Dendritic cell treated with granulocyte-macrophage colony-stimulating factor and Interleukin-4, amounts not matched to agents 40 ng/mL and 50 ng/mL, for 4 days (primary cell): ENCODE measurements at regions of chr17 and their contacts with region 1.

Region 1: GRCh38 chr17:49315551-49316257 is 46.3 kb downstream of the ZNF652 start:
- H3K4me3 Mint-ChIP-seq: no peak overlapping the region
- H3K27ac Mint-ChIP-seq: no peak overlapping the region
- H3K4me1 Mint-ChIP-seq: peaks cover 26% of the 10 kb centered on the region
- H3K27me3 Mint-ChIP-seq: no peaks in the 10 kb centered on the region

Region 2: GRCh38 chr17:49297141-49297540 is 18.6 kb before region 1 on chr17:
- intact Hi-C with region 1: no loop called
- H3K4me3 Mint-ChIP-seq: no peak overlapping the region
- H3K27ac Mint-ChIP-seq: no peak overlapping the region
- H3K4me1 Mint-ChIP-seq: peaks cover 6% of the 10 kb centered on the region
- H3K27me3 Mint-ChIP-seq: no peaks in the 10 kb centered on the region

Region 3: DNA sequence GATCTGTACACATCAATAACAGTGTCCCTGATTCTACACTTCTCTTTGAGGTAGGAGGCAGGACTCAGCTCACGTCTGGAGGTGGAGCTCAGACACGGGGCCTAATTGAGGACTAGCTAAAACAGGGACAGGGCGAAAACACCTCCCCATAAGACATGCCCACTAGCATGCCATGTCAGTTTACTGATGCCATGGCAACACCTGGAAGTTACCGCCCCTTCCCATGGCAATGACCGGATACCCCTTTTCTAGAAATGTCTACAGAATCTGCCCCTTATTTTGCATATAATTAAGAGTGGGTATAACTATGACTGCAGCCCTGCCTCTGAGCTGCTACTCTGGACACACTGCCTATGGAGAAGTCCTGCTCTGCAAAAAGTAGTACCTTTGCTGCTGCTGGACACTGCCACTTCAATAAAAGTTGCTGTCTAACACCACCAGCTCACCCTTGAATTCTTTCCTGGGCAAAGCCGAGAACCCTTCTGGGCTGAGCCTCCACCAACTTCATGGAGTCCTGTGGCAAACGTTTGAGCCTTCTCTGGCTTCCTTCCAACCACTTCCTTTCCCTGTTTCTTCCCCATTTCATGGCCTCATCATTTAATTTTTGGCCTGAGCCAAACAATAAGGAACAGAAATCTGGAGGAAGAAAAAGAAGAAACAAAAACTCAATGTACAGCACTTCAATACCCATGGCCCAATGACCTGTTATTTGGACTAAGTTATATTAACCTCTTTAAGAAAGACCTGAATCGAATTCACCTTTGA is 78.0 kb after region 1 on chr17:
- intact Hi-C with region 1: loop called (anchors 1 kb)
- H3K4me3 Mint-ChIP-seq: peak overlapping the region; percentile 42
- H3K27ac Mint-ChIP-seq: peak overlapping the region; percentile 86
- H3K4me1 Mint-ChIP-seq: peaks cover 64% of the 10 kb centered on the region
- H3K27me3 Mint-ChIP-seq: no peaks in the 10 kb centered on the region

Region 4: DNA sequence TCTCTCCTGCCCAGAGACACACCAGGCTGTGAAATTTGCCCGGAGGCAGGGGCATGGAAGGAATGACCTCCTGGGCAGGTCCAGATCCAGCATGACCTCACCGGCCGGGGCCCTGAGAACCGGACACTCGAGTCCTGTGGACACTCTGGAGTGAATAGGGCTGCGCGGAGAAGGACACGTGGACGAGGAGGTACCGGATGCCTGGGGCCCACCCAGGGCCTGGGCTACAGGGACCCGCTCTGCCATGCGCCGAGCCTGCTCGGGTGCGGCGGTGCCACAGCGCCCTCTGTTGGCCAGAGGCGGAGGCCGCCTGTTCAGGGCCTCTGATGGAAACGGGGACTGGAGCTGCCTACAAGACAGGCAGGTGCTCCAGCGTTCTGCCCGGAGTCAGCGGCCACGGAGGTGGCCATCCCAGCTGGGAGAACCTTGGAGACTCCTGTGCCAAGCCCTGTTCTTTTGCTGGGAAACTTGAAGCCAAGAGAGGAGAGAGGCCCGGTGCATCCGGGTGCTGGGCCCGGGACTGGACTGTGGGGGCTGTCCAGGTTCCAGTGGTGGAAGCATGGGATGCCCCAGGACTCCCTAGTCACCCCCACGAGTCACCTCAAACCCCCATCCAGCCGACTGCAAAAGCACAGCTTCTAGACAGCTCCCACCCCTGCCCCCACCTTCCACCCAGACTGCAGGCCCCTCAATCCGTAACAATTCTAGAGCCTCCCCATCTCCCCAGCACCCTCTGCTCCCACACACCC is 240.7 kb after region 1 on chr17:
- intact Hi-C with region 1: loop called (anchors 2 kb)
- H3K4me3 Mint-ChIP-seq: no peak overlapping the region
- H3K27ac Mint-ChIP-seq: no peak overlapping the region
- H3K4me1 Mint-ChIP-seq: peaks cover 22% of the 10 kb centered on the region
- H3K27me3 Mint-ChIP-seq: peaks cover 25% of the 10 kb centered on the region